Mammary epithelial cell (primary cell): ENCODE measurements at regions of chr16 and their contacts with region 1.

Region 1: DNA sequence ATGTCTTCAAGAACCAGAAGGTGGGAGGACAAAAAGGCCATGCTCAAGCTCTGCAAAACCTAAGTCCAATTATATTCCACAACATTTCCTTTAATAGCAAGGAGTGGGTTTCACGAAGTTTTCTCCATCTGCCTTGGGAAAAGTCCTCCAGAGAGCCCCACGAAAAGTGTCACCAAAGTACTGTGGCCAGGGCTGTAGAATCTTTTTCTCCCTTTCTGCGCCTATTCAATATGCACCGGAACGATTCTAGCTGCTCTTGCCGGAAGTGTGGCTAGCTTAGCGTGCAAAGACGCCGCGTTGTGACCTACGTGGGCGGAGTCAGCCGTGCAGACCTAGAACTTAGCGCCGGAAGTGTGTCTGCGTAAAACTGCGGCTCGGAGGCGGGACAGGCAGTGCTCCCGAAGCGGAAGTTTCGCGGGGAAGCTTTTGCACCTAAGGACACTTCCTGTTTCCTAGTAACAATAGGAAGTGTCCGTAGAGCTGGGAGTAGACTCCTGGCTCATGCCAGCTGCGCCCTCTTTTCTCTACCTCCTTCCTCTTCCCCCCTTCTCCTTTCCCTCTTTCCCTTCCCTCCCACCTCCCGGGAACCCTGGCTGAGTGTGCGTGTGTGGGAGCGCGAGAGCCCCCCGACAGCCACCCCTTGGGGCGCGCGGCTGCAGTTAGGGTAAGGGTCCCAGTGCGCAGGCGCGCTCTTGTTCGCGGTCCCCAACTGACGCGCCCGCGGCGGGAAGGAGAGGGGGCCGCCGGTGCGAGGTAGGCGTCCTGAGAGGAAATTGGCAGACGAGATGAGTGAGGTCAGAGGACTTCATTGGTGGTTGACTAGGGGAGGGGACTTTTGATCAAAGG is at the starts of genes ZNF646 and ZNF668:
- DNase-seq: peak; percentile 98
- H3K4me3 ChIP-seq: peak within 1 kb of the TSS; percentile 75 to 100 (median 98)
- H3K27ac ChIP-seq: peak within 1 kb of the TSS; percentile 73
- H3K4me1 ChIP-seq: peaks cover 14% of the 10 kb centered on the region
- H3K27me3 ChIP-seq: no peaks in the 10 kb centered on the region
- CTCF ChIP-seq: no peak
- total RNA-seq, gene ZNF646: 15.4 to 15.5 TPM
- total RNA-seq, gene ZNF668: 13.2 to 14.7 TPM

Region 2: GRCh38 chr16:30948667-30949649 is 125.2 kb before region 1 on chr16 and contains the start of gene ORAI3:
- CTCF ChIA-PET with region 1: no interaction called
- dilution Hi-C with region 1: loop called (anchors 5 kb)
- in situ Hi-C with region 1: no loop called
- intact Hi-C with region 1: no loop called
- DNase-seq: peak; percentile 60
- H3K4me3 ChIP-seq: peak within 1 kb of the TSS; percentile 63 to 76 (median 65)
- H3K27ac ChIP-seq: peak within 1 kb of the TSS; percentile 69
- H3K4me1 ChIP-seq: peaks cover 24% of the 10 kb centered on the region
- H3K27me3 ChIP-seq: no peaks in the 10 kb centered on the region
- CTCF ChIP-seq: no peak
- total RNA-seq, gene ORAI3: 31.7 to 37.2 TPM

Region 3: DNA sequence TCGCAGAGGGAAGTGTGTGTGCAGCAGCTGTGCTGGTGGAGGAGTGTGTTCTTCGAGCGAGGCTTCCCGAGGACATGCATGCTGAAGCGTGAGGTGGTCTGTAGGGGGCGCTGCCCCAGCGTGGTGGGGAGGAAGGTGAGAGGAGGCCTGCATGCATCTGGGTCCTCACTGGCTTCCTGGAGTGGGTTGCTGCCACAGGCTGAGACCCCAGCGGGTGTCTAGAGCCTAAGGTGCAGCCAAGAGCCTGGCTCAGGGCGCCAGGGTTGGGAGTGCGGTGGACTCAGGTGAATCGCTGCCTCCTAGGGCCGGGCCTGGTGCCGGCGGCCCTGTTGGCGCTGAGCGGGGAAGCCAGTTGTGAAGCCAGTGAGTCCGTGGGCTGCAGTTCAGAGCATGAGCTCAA is 96.7 kb before region 1 on chr16:
- CTCF ChIA-PET with region 1: no interaction called
- dilution Hi-C with region 1: no loop called
- in situ Hi-C with region 1: no loop called
- intact Hi-C with region 1: no loop called
- DNase-seq: no peak
- H3K4me3 ChIP-seq: no peak overlapping the region
- H3K27ac ChIP-seq: no peak overlapping the region
- H3K4me1 ChIP-seq: no peaks in the 10 kb centered on the region
- H3K27me3 ChIP-seq: no peaks in the 10 kb centered on the region
- CTCF ChIP-seq: peak; percentile 30 to 37

Region 4: DNA sequence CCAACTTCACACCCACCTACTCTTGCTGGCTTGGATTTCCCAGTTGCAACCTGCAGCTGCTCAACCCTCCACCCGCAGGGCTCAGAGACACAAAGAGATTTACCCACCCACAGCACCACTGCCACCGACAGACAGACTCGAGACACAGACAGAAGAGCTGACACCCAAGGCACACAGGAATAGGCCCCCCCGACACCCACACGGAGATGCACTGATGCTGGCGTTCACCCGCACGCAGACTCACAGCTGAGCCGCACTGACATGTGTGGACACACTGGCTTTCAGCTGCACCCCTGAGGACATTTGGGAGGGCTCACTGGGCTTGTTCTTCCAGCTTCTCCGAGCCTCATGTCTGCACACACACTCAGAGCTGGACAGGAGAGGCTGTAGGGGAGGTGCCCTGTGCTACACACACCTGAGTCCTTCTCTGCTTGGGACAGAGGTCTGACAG is 71.9 kb before region 1 on chr16:
- CTCF ChIA-PET with region 1: no interaction called
- dilution Hi-C with region 1: loop called (anchors 5 kb)
- in situ Hi-C with region 1: loop called (anchors 10 kb)
- intact Hi-C with region 1: loop called (anchors 2 kb)
- DNase-seq: peak; percentile 20
- H3K4me3 ChIP-seq: peak overlapping the region in 1 of 3 experiments; percentile 8
- H3K27ac ChIP-seq: no peak overlapping the region
- H3K4me1 ChIP-seq: peaks cover 30% of the 10 kb centered on the region
- H3K27me3 ChIP-seq: no peaks in the 10 kb centered on the region
- CTCF ChIP-seq: no peak

Region 5: DNA sequence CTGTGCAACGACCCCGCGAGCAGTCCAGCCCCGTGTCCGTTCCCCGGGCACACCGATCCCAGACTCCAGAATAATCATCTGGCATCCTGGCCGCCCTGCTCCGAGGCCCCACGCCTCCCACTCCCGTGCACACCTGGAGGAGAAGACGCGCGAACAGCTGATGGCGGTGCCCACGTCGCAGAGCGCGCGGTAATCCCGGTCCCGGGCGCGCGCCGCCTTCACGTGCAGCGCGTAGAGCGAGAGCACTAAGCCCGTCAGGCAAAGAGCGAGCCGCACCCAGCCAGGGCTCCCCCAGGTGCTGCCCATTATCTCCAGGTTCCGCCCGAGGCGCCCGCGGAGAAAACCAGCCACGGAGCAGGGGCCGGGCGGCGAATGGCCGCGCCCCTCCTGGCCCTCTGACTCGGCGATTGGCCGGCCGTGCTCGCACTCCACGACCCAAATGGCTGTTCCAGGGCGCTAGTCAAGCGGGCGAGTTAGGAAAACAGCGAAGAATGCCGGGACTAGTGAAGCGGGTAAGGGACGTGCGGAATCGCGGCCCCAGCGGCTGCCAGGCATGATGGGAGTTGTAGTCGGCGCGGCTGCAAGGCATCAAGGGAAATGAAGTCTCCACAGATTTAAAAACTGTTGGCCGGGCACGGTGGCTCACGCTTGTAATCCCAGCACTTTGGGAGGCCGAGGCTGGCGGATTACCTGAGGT is 20.4 kb after region 1 on chr16 and contains the start of gene VKORC1:
- CTCF ChIA-PET with region 1: no interaction called
- dilution Hi-C with region 1: no loop called
- in situ Hi-C with region 1: no loop called
- intact Hi-C with region 1: loop called (anchors 1 kb)
- DNase-seq: peak; percentile 99
- H3K4me3 ChIP-seq: peak within 1 kb of the TSS; percentile 57 to 98 (median 71)
- H3K27ac ChIP-seq: peak within 1 kb of the TSS; percentile 81
- H3K4me1 ChIP-seq: peaks cover 4% of the 10 kb centered on the region
- H3K27me3 ChIP-seq: no peaks in the 10 kb centered on the region
- CTCF ChIP-seq: no peak
- total RNA-seq, gene VKORC1: 45.7 to 65.0 TPM

Region 6: DNA sequence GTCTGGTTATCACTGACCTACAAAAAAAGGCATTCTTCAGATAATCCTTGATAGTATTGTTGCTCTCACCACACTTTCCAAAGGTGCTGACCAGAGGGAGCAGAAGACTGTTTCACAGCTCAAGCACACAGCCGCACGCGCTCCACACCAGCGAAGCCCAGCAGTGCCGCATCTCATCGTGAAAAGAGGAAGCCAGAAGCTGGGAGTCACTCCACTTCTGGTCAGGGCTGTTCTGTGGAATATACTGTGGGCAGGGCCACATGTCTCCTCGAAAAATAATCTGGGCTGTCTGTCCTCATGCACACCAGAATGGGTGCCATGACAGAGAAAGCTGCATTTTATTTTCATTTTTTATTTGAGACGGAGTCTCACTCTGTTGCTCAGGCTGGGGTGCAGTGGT is 82.9 kb after region 1 on chr16:
- CTCF ChIA-PET with region 1: no interaction called
- dilution Hi-C with region 1: no loop called
- in situ Hi-C with region 1: no loop called
- intact Hi-C with region 1: no loop called
- DNase-seq: no peak
- H3K4me3 ChIP-seq: no peak overlapping the region
- H3K27ac ChIP-seq: no peak overlapping the region
- H3K4me1 ChIP-seq: no peaks in the 10 kb centered on the region
- H3K27me3 ChIP-seq: no peaks in the 10 kb centered on the region
- CTCF ChIP-seq: no peak

Region 7: DNA sequence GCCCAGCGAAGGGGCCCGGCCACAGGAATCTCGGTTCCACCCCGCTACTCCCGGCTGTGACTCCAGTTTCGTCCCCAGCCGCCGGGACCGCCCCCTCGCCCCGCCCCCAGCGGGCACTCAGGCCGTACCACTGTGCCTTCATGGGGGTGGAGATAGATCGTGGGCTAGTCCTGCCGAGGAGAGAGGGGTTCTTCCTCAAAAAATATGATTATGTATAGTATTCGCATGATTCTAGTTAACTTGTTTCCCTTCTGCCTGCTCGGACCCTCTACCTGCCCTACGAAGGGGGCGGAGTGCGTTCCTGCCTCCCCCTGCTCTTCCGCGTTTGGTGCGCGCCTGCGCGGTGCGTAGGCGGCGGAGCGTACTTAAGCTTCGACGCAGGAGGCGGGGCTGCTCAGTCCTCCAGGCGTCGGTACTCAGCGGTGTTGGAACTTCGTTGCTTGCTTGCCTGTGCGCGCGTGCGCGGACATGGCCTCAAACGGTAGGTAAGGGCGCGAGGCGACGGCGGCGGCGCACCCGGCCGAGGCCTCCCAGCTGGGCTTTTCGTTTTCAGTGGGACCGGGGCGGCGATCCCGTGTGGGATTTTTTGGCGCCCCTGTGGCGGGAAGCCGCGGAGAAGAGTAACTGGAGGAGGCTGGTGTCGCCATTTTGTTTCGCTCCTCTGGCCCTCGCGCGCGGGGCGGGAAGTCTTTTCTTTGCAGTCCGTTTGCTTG is 105.7 kb after region 1 on chr16 and contains the start of gene FUS:
- CTCF ChIA-PET with region 1: interaction called, 9 read pairs
- dilution Hi-C with region 1: loop called (anchors 5 kb)
- in situ Hi-C with region 1: no loop called
- intact Hi-C with region 1: no loop called
- DNase-seq: peak; percentile 79
- H3K4me3 ChIP-seq: peak within 1 kb of the TSS; percentile 62 to 95 (median 75)
- H3K27ac ChIP-seq: peak within 1 kb of the TSS; percentile 95
- H3K4me1 ChIP-seq: peaks cover 27% of the 10 kb centered on the region
- H3K27me3 ChIP-seq: no peaks in the 10 kb centered on the region
- CTCF ChIP-seq: no peak
- total RNA-seq, gene FUS: 19.5 to 404 TPM